HCT116 (cell line): ENCODE measurements at regions of chr7 and their contacts with region 1.

Region 1: DNA sequence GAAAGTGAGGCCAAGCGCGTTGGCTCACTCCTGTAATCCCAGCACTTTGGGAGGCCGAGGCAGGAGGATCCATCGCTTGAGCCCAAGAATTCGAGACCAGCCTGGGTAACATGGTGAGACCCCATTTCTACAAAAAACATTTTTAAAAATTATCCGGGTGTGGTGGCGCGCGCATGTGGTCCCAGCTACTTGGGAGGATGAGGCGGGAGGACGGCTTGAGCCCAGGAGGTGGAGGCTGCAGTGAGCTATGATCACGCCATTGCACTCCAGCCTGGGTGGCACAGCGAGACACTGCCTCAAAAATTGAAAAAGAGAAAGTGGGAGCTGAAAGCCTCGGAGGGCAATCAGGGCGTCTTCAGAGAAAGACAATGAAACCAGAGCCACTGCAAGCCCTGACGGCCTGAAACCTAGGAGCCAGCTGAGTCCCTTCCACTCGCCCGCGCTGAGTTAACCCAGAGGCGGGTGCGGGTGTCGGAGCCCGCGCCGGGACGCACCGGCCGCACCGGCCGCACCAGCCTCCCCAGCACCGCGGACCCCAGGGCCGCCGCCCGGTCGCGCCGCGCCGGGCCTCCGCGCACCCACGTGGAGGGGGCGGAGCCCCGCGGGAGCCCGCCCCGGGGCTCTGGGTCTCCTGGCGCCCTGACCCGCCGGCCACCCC is 22.4 kb downstream of the ZFAND2A start:
- DNase-seq: no peak
- ATAC-seq: peak; percentile 74
- H3K4me3 ChIP-seq: peak overlapping the region; percentile 75 to 82
- H3K27ac ChIP-seq: peak overlapping the region; percentile 78
- H3K4me1 ChIP-seq: peaks cover 0 to 20% of the 10 kb centered on the region in 2 experiments; a peak in 2 of 4 replicates
- H3K27me3 ChIP-seq: no peaks in the 10 kb centered on the region
- CTCF ChIP-seq: no peak
- POLR2A ChIP-seq: no peak
- RAD21 ChIP-seq: no peak

Region 2: GRCh38 chr7:1076181-1077072 is 61.2 kb before region 1 on chr7:
- CTCF ChIA-PET with region 1: no interaction called
- POLR2A ChIA-PET with region 1: no interaction called
- RAD21 ChIA-PET with region 1: no interaction called
- intact Hi-C with region 1: no loop called
- DNase-seq: no peak
- ATAC-seq: peak; percentile 27
- H3K4me3 ChIP-seq: no peak overlapping the region
- H3K27ac ChIP-seq: no peak overlapping the region
- H3K4me1 ChIP-seq: peaks cover 0 to 5% of the 10 kb centered on the region in 2 experiments; a peak in 2 of 4 replicates
- H3K27me3 ChIP-seq: no peaks in the 10 kb centered on the region
- CTCF ChIP-seq: no peak
- POLR2A ChIP-seq: no peak
- RAD21 ChIP-seq: no peak

Region 3: DNA sequence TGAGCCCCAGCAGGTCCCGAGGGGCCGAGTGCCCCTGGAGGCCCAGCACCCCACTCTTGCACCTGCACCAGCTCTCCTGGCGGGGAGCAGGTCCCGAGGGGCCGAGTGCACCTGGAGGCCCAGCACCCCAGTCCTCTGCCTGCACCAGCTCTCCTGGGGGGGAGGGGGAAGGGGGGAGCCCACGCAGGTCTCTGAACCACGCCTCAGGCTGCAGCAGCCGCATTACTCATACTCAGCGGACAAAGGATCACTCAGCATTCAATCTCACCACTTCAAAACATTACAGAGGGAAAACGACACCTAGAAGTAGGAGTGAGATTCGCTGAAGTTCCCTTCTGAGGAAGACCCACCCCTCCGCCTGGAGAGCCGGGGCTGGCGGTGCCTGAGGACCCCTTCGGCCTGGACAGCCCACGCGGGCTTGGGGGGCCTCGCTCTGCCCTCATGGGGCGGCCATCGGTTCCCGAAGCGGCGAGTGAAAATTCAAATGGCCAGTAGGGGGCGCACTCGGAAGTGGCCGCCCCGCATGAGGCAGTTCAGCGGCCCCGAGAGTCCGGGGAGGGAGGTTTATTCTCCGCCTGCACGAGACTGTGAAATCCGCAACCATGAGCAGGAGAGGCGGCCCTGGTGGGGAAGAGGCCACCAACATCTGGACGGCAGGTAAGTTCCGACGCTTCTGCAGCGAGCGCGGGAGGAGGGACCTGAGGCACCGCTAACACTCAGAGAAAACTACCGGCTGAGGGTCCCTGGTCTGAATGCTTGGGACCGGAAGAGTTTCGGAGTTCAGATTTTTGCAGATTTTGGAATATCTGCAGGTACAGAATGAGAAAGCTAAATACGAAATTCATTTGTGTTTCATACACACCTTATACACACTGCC is 50.8 kb before region 1 on chr7:
- CTCF ChIA-PET with region 1: no interaction called
- POLR2A ChIA-PET with region 1: no interaction called
- RAD21 ChIA-PET with region 1: no interaction called
- intact Hi-C with region 1: loop called (anchors 5 kb)
- DNase-seq: peak; percentile 34
- ATAC-seq: peak; percentile 85
- H3K4me3 ChIP-seq: peak overlapping the region; percentile 36 to 50
- H3K27ac ChIP-seq: peak overlapping the region; percentile 49
- H3K4me1 ChIP-seq: peaks cover 26 to 33% of the 10 kb centered on the region in 2 experiments
- H3K27me3 ChIP-seq: no peaks in the 10 kb centered on the region
- CTCF ChIP-seq: peak; percentile 76 to 91 (median 87)
- POLR2A ChIP-seq: no peak
- RAD21 ChIP-seq: peak; percentile 60

Region 4: GRCh38 chr7:1175967-1176851 is 38.6 kb after region 1 on chr7:
- CTCF ChIA-PET with region 1: interaction called, 18 read pairs
- POLR2A ChIA-PET with region 1: no interaction called
- RAD21 ChIA-PET with region 1: no interaction called
- intact Hi-C with region 1: no loop called
- DNase-seq: peak; percentile 56
- ATAC-seq: peak; percentile 78
- H3K4me3 ChIP-seq: peak overlapping the region; percentile 39 to 56
- H3K27ac ChIP-seq: peak overlapping the region; percentile 41
- H3K4me1 ChIP-seq: peaks cover 10 to 18% of the 10 kb centered on the region in 2 experiments
- H3K27me3 ChIP-seq: no peaks in the 10 kb centered on the region
- CTCF ChIP-seq: peak; percentile 89 to 92 (median 92)
- POLR2A ChIP-seq: no peak
- RAD21 ChIP-seq: peak; percentile 81

Region 5: GRCh38 chr7:1181640-1182039 is 44.0 kb after region 1 on chr7:
- CTCF ChIA-PET with region 1: interaction called, 18 read pairs
- POLR2A ChIA-PET with region 1: no interaction called
- RAD21 ChIA-PET with region 1: no interaction called
- intact Hi-C with region 1: no loop called
- DNase-seq: no peak
- ATAC-seq: no peak
- H3K4me3 ChIP-seq: no peak overlapping the region
- H3K27ac ChIP-seq: no peak overlapping the region
- H3K4me1 ChIP-seq: peaks cover 6 to 15% of the 10 kb centered on the region in 2 experiments
- H3K27me3 ChIP-seq: no peaks in the 10 kb centered on the region
- CTCF ChIP-seq: no peak
- POLR2A ChIP-seq: no peak
- RAD21 ChIP-seq: no peak

Region 6: DNA sequence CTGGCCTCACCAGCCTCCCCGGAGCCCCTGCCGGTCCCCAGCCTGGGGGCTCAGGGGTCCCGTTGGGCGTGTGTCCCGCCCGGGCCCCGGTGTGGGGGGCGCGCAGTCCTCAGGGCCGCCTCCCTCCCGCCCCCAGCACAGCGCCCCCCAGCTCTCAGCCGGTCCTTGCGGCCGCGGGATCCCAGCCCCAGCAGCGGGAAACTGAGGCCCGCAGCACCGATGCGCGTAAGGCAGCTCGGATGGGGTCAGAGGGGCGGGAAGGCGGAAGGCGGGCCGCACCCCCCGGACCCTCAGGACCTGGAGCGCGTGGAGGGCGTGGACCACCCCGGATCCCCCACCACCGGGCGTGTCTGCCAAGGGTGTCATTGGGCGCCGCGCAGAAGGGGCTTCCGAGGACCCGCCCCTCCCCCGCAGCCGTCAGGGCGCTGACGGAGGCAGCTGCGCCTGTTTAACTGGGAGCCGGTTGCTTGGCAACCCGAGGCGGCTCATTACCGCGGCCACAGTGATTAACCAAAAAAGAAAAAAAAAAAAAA is 110.0 kb after region 1 on chr7:
- CTCF ChIA-PET with region 1: no interaction called
- POLR2A ChIA-PET with region 1: no interaction called
- RAD21 ChIA-PET with region 1: no interaction called
- intact Hi-C with region 1: no loop called
- DNase-seq: no peak
- ATAC-seq: no peak
- H3K4me3 ChIP-seq: no peak overlapping the region
- H3K27ac ChIP-seq: no peak overlapping the region
- H3K4me1 ChIP-seq: no peaks in the 10 kb centered on the region
- H3K27me3 ChIP-seq: no peaks in the 10 kb centered on the region
- CTCF ChIP-seq: no peak
- POLR2A ChIP-seq: no peak
- RAD21 ChIP-seq: no peak

Region 7: GRCh38 chr7:1800902-1801301 is 663.3 kb after region 1 on chr7:
- CTCF ChIA-PET with region 1: no interaction called
- POLR2A ChIA-PET with region 1: no interaction called
- RAD21 ChIA-PET with region 1: no interaction called
- intact Hi-C with region 1: no loop called
- DNase-seq: no peak
- ATAC-seq: no peak
- H3K4me3 ChIP-seq: no peak overlapping the region
- H3K27ac ChIP-seq: no peak overlapping the region
- H3K4me1 ChIP-seq: no peaks in the 10 kb centered on the region
- H3K27me3 ChIP-seq: no peaks in the 10 kb centered on the region
- CTCF ChIP-seq: no peak
- POLR2A ChIP-seq: no peak
- RAD21 ChIP-seq: no peak